ENCODE measurements at regions of chr15 and their contacts with region 1.

Region 1: DNA sequence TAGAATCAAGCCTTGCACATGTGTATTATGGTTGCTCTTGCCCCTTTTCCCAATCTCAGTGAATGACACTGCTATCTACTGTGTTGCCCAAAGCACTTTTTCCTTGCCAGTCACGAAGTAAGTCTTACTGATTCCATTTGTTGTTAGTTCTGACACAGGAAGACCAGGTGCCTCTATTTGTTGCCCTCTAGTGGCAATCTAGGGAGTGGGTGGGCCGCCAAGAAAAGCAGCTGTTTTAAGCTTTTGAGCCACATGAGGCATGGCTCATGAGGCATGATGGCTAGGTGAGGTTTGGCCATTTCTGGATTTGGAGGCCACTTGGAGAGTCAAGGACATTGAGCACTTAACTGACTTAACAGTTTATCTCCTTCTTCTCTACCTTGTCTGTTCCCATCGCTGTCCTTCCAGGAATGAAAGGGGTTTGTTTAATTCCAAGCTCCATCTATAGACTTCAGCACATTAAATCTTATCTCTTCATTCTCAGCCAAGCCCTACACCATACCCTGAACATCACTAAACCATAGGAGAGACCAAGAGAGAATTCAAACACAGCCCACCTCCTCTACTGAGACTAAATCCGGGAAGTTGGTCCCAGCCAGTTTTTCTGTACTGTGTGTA is 103.1 kb downstream of the HCN4 start:
- DNase-seq: peak; percentile 3 to 59 (median 42)
- ATAC-seq: peak; percentile 55
- H3K4me3 ChIP-seq: no peak overlapping the region
- H3K4me3 Mint-ChIP-seq: no peak overlapping the region
- H3K27ac ChIP-seq: no peak overlapping the region
- H3K27ac Mint-ChIP-seq: no peak overlapping the region
- H3K4me1 ChIP-seq: no peaks in the 10 kb centered on the region
- H3K4me1 Mint-ChIP-seq: no peaks in the 10 kb centered on the region
- H3K27me3 ChIP-seq: no peaks in the 10 kb centered on the region
- H3K27me3 Mint-ChIP-seq: no peaks in the 10 kb centered on the region
- CTCF ChIP-seq: peak; percentile 56

Region 2: DNA sequence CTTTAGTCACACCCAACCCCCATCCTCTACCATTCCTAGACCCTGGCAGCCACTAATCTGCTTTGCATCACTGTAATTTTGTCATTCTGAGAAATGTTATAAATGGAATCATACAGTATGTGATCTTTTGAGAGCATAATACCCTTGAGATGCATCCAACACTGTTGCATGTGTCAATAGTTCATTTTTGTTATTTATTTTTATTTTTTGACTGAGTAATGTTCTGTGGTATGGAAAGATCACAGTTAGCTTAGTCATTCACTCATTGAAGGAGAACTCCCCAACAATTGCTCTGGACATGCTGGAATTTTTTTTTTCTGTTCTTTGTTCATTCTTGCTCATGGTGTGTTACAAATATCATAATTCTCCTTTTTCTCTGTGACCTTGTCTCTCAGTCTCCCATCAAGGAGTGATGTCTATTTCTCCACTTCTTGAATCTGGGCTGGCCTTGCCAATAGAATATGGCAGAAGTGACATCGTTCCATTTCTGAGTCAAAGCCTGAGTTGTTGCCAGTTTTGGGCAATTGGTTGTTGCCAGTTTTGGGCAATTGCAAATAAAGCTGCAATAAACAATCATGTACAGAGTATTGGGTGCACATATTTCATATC is 475.2 kb before region 1 on chr15:
- CTCF ChIA-PET with region 1: no interaction called
- POLR2A ChIA-PET with region 1: no interaction called
- intact Hi-C with region 1: loop called in 1 of 2 experiments (anchors 5 kb)
- DNase-seq: no peak
- ATAC-seq: no peak
- H3K4me3 ChIP-seq: no peak overlapping the region
- H3K4me3 Mint-ChIP-seq: no peak overlapping the region
- H3K27ac ChIP-seq: no peak overlapping the region
- H3K27ac Mint-ChIP-seq: no peak overlapping the region
- H3K4me1 ChIP-seq: peaks cover 3% of the 10 kb centered on the region
- H3K4me1 Mint-ChIP-seq: peaks cover 3% of the 10 kb centered on the region
- H3K27me3 ChIP-seq: no peaks in the 10 kb centered on the region
- H3K27me3 Mint-ChIP-seq: peaks cover 12% of the 10 kb centered on the region
- CTCF ChIP-seq: no peak

Region 3: GRCh38 chr15:73249499-73249898 is 16.1 kb before region 1 on chr15:
- CTCF ChIA-PET with region 1: interaction called, 12 read pairs
- POLR2A ChIA-PET with region 1: no interaction called
- intact Hi-C with region 1: no loop called
- DNase-seq: no peak
- ATAC-seq: no peak
- H3K4me3 ChIP-seq: no peak overlapping the region
- H3K4me3 Mint-ChIP-seq: no peak overlapping the region
- H3K27ac ChIP-seq: no peak overlapping the region
- H3K27ac Mint-ChIP-seq: no peak overlapping the region
- H3K4me1 ChIP-seq: no peaks in the 10 kb centered on the region
- H3K4me1 Mint-ChIP-seq: no peaks in the 10 kb centered on the region
- H3K27me3 ChIP-seq: no peaks in the 10 kb centered on the region
- H3K27me3 Mint-ChIP-seq: peaks cover 4% of the 10 kb centered on the region
- CTCF ChIP-seq: no peak

Region 4: GRCh38 chr15:73254598-73254997 is 11.0 kb before region 1 on chr15:
- CTCF ChIA-PET with region 1: interaction called, 12 read pairs
- POLR2A ChIA-PET with region 1: no interaction called
- intact Hi-C with region 1: no loop called
- DNase-seq: no peak
- ATAC-seq: no peak
- H3K4me3 ChIP-seq: no peak overlapping the region
- H3K4me3 Mint-ChIP-seq: no peak overlapping the region
- H3K27ac ChIP-seq: no peak overlapping the region
- H3K27ac Mint-ChIP-seq: no peak overlapping the region
- H3K4me1 ChIP-seq: no peaks in the 10 kb centered on the region
- H3K4me1 Mint-ChIP-seq: no peaks in the 10 kb centered on the region
- H3K27me3 ChIP-seq: no peaks in the 10 kb centered on the region
- H3K27me3 Mint-ChIP-seq: no peaks in the 10 kb centered on the region
- CTCF ChIP-seq: no peak

Region 5: GRCh38 chr15:73352082-73352481 is 86.4 kb after region 1 on chr15:
- CTCF ChIA-PET with region 1: no interaction called
- POLR2A ChIA-PET with region 1: no interaction called
- intact Hi-C with region 1: no loop called
- DNase-seq: no peak
- ATAC-seq: no peak
- H3K4me3 ChIP-seq: no peak overlapping the region
- H3K4me3 Mint-ChIP-seq: no peak overlapping the region
- H3K27ac ChIP-seq: no peak overlapping the region
- H3K27ac Mint-ChIP-seq: no peak overlapping the region
- H3K4me1 ChIP-seq: no peaks in the 10 kb centered on the region
- H3K4me1 Mint-ChIP-seq: no peaks in the 10 kb centered on the region
- H3K27me3 ChIP-seq: no peaks in the 10 kb centered on the region
- H3K27me3 Mint-ChIP-seq: peaks cover 4% of the 10 kb centered on the region
- CTCF ChIP-seq: no peak